ENCODE measurements at regions of chr4 and their contacts with region 1.

Region 1: DNA sequence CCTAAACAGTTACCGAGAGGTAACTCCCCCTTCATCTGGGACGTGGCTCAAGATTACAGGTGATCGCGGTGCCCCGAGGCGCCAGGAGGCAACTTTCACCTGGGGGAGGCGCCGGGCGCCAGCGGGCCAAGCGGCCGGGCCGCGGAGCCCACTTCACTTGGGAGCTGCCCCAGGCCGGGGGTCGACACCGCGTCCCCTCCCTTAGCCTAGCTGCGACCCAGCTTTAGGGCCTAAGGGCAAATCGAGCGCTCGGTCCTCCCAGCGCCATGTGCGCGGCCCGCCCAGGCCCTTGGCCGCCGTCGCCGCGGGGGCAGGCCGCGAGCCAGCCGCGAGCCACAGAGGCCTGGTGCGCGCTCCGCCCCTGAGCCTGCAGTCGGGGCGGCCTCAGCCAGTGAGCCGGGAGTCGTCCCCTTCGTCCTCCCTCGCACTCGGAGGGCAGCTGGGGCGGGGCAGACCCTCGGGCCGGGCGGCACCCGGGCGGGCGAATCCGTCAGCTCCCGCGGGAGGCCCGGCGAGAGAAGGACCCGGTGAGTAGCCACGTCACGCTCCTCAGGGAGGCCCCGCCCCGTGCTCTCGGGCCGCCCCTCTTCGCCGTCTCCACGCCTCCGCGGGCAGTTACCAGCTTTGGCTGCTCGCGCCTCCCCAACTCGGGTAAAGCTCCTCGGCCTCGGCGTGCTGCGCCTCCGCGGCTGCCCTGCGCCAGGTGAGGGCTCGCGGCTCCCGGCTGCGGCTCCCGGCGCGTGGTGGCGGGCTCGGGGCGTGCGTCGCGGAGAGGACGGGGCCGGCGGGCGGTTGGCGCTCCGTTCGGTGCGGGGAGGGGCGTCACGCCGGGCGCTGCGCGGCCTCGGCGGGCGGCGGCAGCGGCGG is at the start of gene LARP1B:
- DNase-seq: peak; percentile 83 to 96 (median 89)
- ATAC-seq: peak; percentile 93
- H3K4me3 ChIP-seq: peak within 1 kb of the TSS; percentile 74
- H3K4me3 Mint-ChIP-seq: peak within 1 kb of the TSS; percentile 82 to 91 (median 88)
- H3K27ac ChIP-seq: peak within 1 kb of the TSS; percentile 90
- H3K27ac Mint-ChIP-seq: peak within 1 kb of the TSS; percentile 87 to 94 (median 91)
- H3K4me1 ChIP-seq: peaks cover 0 to 5% of the 10 kb centered on the region in 2 donors
- H3K4me1 Mint-ChIP-seq: peaks cover 0 to 16% (median 10%) of the 10 kb centered on the region in 7 donors
- H3K27me3 ChIP-seq: no peaks in the 10 kb centered on the region
- H3K27me3 Mint-ChIP-seq: peaks cover 0 to 2% (median 0%) of the 10 kb centered on the region in 5 donors
- total RNA-seq, gene LARP1B: 9.5 to 18.2 (median 13.7) TPM

Region 2: GRCh38 chr4:127782274-127783025 is 278.5 kb before region 1 on chr4 and contains the start of gene HSPA4L:
- CTCF ChIA-PET with region 1: no interaction called
- POLR2A ChIA-PET with region 1: no interaction called
- intact Hi-C with region 1: loop called in 1 of 2 experiments (anchors 2 kb)
- DNase-seq: peak in 8 of 9 donors; percentile 7 to 77 (median 22)
- ATAC-seq: peak; percentile 81
- H3K4me3 ChIP-seq: peak within 1 kb of the TSS; percentile 66
- H3K4me3 Mint-ChIP-seq: peak within 1 kb of the TSS; percentile 86 to 96 (median 91)
- H3K27ac ChIP-seq: no peak within 1 kb of the TSS
- H3K27ac Mint-ChIP-seq: peak within 1 kb of the TSS in 5 of 9 donors; percentile 7 to 86 (median 49)
- H3K4me1 ChIP-seq: peaks cover 0 to 6% of the 10 kb centered on the region in 2 donors
- H3K4me1 Mint-ChIP-seq: peaks cover 13 to 20% (median 18%) of the 10 kb centered on the region in 7 donors
- H3K27me3 ChIP-seq: peaks cover 20 to 21% of the 10 kb centered on the region in 2 donors
- H3K27me3 Mint-ChIP-seq: peaks cover 64 to 78% (median 67%) of the 10 kb centered on the region in 5 donors
- total RNA-seq, gene HSPA4L: 1.1 TPM in 1 of 5 experiments, not detected in the others

Region 3: GRCh38 chr4:127880764-127881562 is 180.0 kb before region 1 on chr4 and contains the start of gene PLK4:
- CTCF ChIA-PET with region 1: no interaction called
- POLR2A ChIA-PET with region 1: interaction called, 9 read pairs
- intact Hi-C with region 1: loop called (anchors 1 kb)
- DNase-seq: peak; percentile 91 to 96 (median 95)
- ATAC-seq: peak; percentile 97
- H3K4me3 ChIP-seq: peak within 1 kb of the TSS; percentile 93
- H3K4me3 Mint-ChIP-seq: peak within 1 kb of the TSS; percentile 90 to 99 (median 97)
- H3K27ac ChIP-seq: peak within 1 kb of the TSS; percentile 75
- H3K27ac Mint-ChIP-seq: peak within 1 kb of the TSS; percentile 95 to 99 (median 99)
- H3K4me1 ChIP-seq: peaks cover 4 to 10% of the 10 kb centered on the region in 2 donors
- H3K4me1 Mint-ChIP-seq: peaks cover 4 to 37% (median 28%) of the 10 kb centered on the region in 7 donors
- H3K27me3 ChIP-seq: no peaks in the 10 kb centered on the region
- H3K27me3 Mint-ChIP-seq: peaks cover 0 to 3% (median 0%) of the 10 kb centered on the region in 5 donors
- total RNA-seq, gene PLK4: 3.4 to 34.7 (median 3.9) TPM

Region 4: DNA sequence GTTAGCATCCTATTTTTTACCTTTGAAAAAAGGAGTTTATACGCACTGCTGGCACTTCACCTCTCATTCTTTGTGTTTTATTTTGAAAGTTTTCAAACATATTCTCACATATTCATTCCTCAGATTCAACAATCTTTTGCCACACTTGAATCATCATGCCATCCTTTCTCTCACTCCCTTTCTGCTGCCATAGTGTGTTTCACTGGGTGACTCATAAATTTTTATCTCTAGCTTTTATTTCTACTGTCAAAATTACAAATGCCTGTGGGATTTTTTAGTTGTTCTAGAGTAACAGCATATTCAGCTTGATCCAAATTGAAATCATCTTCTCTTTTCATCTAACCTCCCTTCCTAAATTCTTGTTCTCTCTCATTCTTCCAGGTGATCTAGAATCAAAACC is 124.0 kb before region 1 on chr4:
- CTCF ChIA-PET with region 1: no interaction called
- POLR2A ChIA-PET with region 1: no interaction called
- intact Hi-C with region 1: no loop called
- DNase-seq: no peak
- ATAC-seq: no peak
- H3K4me3 ChIP-seq: no peak overlapping the region
- H3K4me3 Mint-ChIP-seq: no peak overlapping the region
- H3K27ac ChIP-seq: no peak overlapping the region
- H3K27ac Mint-ChIP-seq: no peak overlapping the region
- H3K4me1 ChIP-seq: no peaks in the 10 kb centered on the region
- H3K4me1 Mint-ChIP-seq: no peaks in the 10 kb centered on the region
- H3K27me3 ChIP-seq: no peaks in the 10 kb centered on the region
- H3K27me3 Mint-ChIP-seq: no peaks in the 10 kb centered on the region

Region 5: GRCh38 chr4:127965062-127965802 is 95.7 kb before region 1 on chr4 and contains the starts of genes ABHD18 and MFSD8:
- CTCF ChIA-PET with region 1: no interaction called
- POLR2A ChIA-PET with region 1: interaction called, 43 read pairs
- intact Hi-C with region 1: loop called (anchors 1 kb)
- DNase-seq: peak; percentile 93 to 98 (median 98)
- ATAC-seq: peak; percentile 96
- H3K4me3 ChIP-seq: peak within 1 kb of the TSS; percentile 100
- H3K4me3 Mint-ChIP-seq: peak within 1 kb of the TSS; percentile 78 to 98 (median 94)
- H3K27ac ChIP-seq: peak within 1 kb of the TSS; percentile 92
- H3K27ac Mint-ChIP-seq: peak within 1 kb of the TSS; percentile 88 to 99 (median 95)
- H3K4me1 ChIP-seq: peaks cover 5 to 13% of the 10 kb centered on the region in 2 donors
- H3K4me1 Mint-ChIP-seq: peaks cover 14 to 66% (median 52%) of the 10 kb centered on the region in 7 donors
- H3K27me3 ChIP-seq: no peaks in the 10 kb centered on the region
- H3K27me3 Mint-ChIP-seq: peaks cover 0 to 3% (median 0%) of the 10 kb centered on the region in 5 donors
- total RNA-seq, gene ABHD18: 22.4 to 26.6 (median 25.1) TPM
- total RNA-seq, gene MFSD8: 20.3 to 54.5 (median 23.0) TPM

Region 6: GRCh38 chr4:127997534-127998388 is 63.2 kb before region 1 on chr4:
- CTCF ChIA-PET with region 1: no interaction called
- POLR2A ChIA-PET with region 1: no interaction called
- intact Hi-C with region 1: loop called in 1 of 2 experiments (anchors 2 kb)
- DNase-seq: no peak
- ATAC-seq: peak; percentile 72
- H3K4me3 ChIP-seq: no peak overlapping the region
- H3K4me3 Mint-ChIP-seq: peak overlapping the region in 1 of 10 donors; percentile 64
- H3K27ac ChIP-seq: no peak overlapping the region
- H3K27ac Mint-ChIP-seq: no peak overlapping the region
- H3K4me1 ChIP-seq: no peaks in the 10 kb centered on the region
- H3K4me1 Mint-ChIP-seq: peaks cover 12 to 41% (median 29%) of the 10 kb centered on the region in 7 donors
- H3K27me3 ChIP-seq: no peaks in the 10 kb centered on the region
- H3K27me3 Mint-ChIP-seq: no peaks in the 10 kb centered on the region

Measured in naive thymus-derived CD4-positive, alpha-beta T cell (primary cell).